ENCODE measurements at regions of chr7 and their contacts with region 1.

Region 1: GRCh38 chr7:13524076-13524475 is 465.4 kb downstream of the ETV1 start:
- DNase-seq: no peak
- ATAC-seq: peak; percentile 60; the same call in 1 of the 2 replicates
- H3K4me3 ChIP-seq: no peak overlapping the region
- H3K27ac ChIP-seq: no peak overlapping the region
- H3K4me1 ChIP-seq: peaks cover 4% of the 10 kb centered on the region; the same call in 1 of the 2 replicates
- H3K27me3 ChIP-seq: no peaks in the 10 kb centered on the region
- CTCF ChIP-seq: no peak

Region 2: GRCh38 chr7:13628239-13629001 is 104.3 kb after region 1 on chr7:
- CTCF ChIA-PET with region 1: no interaction called
- POLR2A ChIA-PET with region 1: no interaction called
- intact Hi-C with region 1: loop called (anchors 1 kb)
- DNase-seq: peak; percentile 65
- ATAC-seq: peak; percentile 70
- H3K4me3 ChIP-seq: no peak overlapping the region
- H3K27ac ChIP-seq: peak overlapping the region; percentile 90
- H3K4me1 ChIP-seq: peaks cover 24% of the 10 kb centered on the region
- H3K27me3 ChIP-seq: no peaks in the 10 kb centered on the region
- CTCF ChIP-seq: no peak

Region 3: GRCh38 chr7:13725591-13725990 is 201.5 kb after region 1 on chr7:
- CTCF ChIA-PET with region 1: no interaction called
- POLR2A ChIA-PET with region 1: no interaction called
- intact Hi-C with region 1: loop called (anchors 1 kb)
- DNase-seq: no peak
- ATAC-seq: no peak
- H3K4me3 ChIP-seq: no peak overlapping the region
- H3K27ac ChIP-seq: peak overlapping the region; percentile 58
- H3K4me1 ChIP-seq: peaks cover 10% of the 10 kb centered on the region
- H3K27me3 ChIP-seq: no peaks in the 10 kb centered on the region
- CTCF ChIP-seq: 0 out of 2 replicates have a peak, but pooled peaks have one; percentile 11

Region 4: DNA sequence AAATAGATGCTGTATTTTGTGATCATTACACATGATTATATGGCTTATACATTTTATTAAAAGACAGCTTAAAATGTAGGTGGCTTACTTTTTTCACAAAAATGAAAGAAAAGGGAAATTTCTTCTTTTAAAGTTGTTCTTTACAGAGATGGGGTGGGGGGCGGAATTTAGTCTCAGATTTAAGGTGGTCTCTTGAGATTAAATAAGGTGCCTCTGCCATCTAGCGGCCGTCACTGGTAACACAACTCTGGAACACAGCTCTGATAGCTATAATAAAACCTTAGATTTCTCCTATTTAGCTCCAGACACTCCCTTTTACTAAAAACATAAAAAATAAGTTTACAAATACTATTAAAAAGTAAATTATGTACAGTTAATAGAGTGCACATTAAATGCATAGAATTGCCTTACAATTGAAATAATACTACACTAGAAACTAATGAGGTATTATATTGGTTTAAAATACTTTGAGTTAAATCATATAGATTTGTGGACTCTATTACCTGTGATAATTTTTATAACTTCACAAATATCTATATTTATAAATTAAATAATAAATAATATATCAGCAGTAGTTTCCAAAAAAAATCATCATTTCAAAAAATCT is 1167.6 kb after region 1 on chr7:
- CTCF ChIA-PET with region 1: no interaction called
- POLR2A ChIA-PET with region 1: no interaction called
- intact Hi-C with region 1: loop called (anchors 10 kb)
- DNase-seq: peak; percentile 57
- ATAC-seq: peak; percentile 29; the same call in 1 of the 2 replicates
- H3K4me3 ChIP-seq: no peak overlapping the region
- H3K27ac ChIP-seq: no peak overlapping the region
- H3K4me1 ChIP-seq: no peaks in the 10 kb centered on the region
- H3K27me3 ChIP-seq: no peaks in the 10 kb centered on the region
- CTCF ChIP-seq: peak; percentile 93

Measured in PC-3 (cell line).